ENCODE measurements at regions of chr2 and their contacts with region 1.

Region 1: DNA sequence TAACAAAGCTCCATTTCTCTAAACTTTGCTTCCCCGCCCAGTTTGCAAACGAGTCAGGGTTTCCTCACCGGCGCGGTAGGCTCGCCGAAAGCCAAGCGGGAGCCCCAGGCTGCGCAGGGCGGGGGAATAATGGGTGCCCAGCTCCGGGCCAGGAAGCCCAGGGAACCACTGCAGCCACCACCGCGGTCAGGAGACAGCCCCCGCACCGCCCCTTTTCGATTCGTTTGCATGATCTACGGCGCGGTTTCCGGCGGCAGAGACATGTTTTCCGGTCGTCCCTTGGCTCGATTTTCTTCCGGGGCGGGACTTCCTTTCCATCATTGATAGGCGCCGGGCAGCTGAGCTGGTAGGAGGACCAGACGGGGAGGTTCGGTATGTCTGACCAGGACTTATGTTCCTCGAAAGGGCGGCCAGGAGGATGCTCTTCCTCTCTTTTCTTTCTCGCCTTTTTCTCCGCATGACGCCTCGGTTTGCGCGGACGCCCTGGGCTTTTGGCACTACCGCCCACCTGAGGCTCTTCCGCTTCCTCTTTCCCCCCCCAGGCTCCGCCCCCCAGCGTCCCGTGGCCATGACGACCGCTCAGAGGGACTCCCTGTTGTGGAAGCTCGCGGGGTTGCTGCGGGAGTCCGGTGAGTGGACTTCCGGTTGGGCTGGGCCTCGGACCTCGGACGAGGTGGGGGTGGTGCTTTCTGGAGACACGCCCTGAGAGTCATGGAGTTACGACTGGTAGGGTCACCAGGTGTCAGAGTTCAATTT is at the start of gene STK11IP:
- DNase-seq: peak; percentile 87 to 93 (median 88)
- H3K4me3 ChIP-seq: peak within 1 kb of the TSS; percentile 62 to 100
- H3K4me3 Mint-ChIP-seq: peak within 1 kb of the TSS; percentile 90 to 97 (median 96)
- H3K27ac ChIP-seq: peak within 1 kb of the TSS; percentile 72
- H3K27ac Mint-ChIP-seq: peak within 1 kb of the TSS; percentile 90 to 99 (median 97)
- H3K4me1 ChIP-seq: peaks cover 14% of the 10 kb centered on the region
- H3K4me1 Mint-ChIP-seq: peaks cover 10 to 24% (median 17%) of the 10 kb centered on the region in 4 donors
- H3K27me3 ChIP-seq: no peaks in the 10 kb centered on the region
- H3K27me3 Mint-ChIP-seq: peaks cover 3 to 7% of the 10 kb centered on the region in 2 donors
- total RNA-seq, gene STK11IP: 48.7 to 50.2 TPM

Region 2: DNA sequence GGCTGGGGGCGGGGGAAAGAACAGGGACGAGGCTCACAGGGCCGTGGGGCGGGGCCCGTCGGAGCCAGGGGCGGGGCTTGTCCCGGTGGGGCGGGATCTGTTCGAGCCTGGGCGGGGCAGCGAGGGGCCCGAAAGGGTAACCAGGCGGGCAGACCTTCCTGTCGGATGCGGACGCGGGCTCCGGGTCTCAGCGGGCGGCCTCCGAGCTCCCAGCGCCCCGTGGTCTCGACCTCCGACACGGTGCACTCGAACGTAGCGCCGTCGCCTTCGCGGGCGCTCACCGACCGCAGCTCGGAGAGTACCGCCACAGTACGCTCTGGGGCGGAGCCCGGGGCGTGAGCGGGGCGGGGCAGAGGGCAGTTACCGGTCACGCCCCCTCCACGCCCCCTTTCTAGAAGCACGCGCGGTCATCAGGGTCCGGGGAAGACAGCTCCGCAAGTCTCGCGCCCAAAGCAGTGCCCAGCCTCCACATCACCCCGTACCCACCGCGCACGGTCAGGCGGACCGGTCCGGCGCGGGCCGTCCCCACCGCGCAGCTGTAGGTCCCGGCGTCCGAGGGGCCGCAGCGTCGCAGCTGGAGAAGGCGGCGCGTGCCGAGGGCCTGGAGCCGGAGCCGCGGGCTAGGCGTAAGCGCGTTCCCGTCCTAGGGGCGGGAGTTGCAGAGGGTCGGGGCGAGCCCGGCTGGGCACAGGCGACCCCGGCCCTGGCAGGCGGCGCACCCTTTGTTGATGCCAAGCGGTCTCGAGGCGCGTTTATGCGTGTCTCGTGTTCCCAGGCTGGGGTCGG is 45.2 kb before region 1 on chr2:
- CTCF ChIA-PET with region 1: interaction called, 3 read pairs
- POLR2A ChIA-PET with region 1: interaction called, 10 read pairs
- intact Hi-C with region 1: loop called (anchors 2 kb)
- DNase-seq: peak; percentile 70 to 79 (median 76)
- H3K4me3 ChIP-seq: peak overlapping the region; percentile 11 to 44
- H3K4me3 Mint-ChIP-seq: peak overlapping the region; percentile 51 to 86 (median 75)
- H3K27ac ChIP-seq: no peak overlapping the region
- H3K27ac Mint-ChIP-seq: peak overlapping the region in 2 of 7 donors; percentile 22 to 79
- H3K4me1 ChIP-seq: peaks cover 18% of the 10 kb centered on the region
- H3K4me1 Mint-ChIP-seq: peaks cover 5 to 18% (median 10%) of the 10 kb centered on the region in 4 donors
- H3K27me3 ChIP-seq: peaks cover 11% of the 10 kb centered on the region
- H3K27me3 Mint-ChIP-seq: peaks cover 25 to 52% of the 10 kb centered on the region in 2 donors

Region 3: GRCh38 chr2:219642465-219643080 is 44.8 kb after region 1 on chr2:
- CTCF ChIA-PET with region 1: interaction called, 5 read pairs
- POLR2A ChIA-PET with region 1: no interaction called
- intact Hi-C with region 1: loop called (anchors 1 kb)
- DNase-seq: peak; percentile 80 to 88 (median 83)
- H3K4me3 ChIP-seq: no peak overlapping the region
- H3K4me3 Mint-ChIP-seq: no peak overlapping the region
- H3K27ac ChIP-seq: no peak overlapping the region
- H3K27ac Mint-ChIP-seq: peak overlapping the region in 4 of 7 donors; percentile 32 to 70 (median 53)
- H3K4me1 ChIP-seq: no peaks in the 10 kb centered on the region
- H3K4me1 Mint-ChIP-seq: peaks cover 0 to 6% (median 4%) of the 10 kb centered on the region in 4 donors
- H3K27me3 ChIP-seq: no peaks in the 10 kb centered on the region
- H3K27me3 Mint-ChIP-seq: peaks cover 12 to 36% of the 10 kb centered on the region in 2 donors

Region 4: GRCh38 chr2:219701847-219702634 is 104.3 kb after region 1 on chr2:
- CTCF ChIA-PET with region 1: no interaction called
- POLR2A ChIA-PET with region 1: no interaction called
- intact Hi-C with region 1: no loop called
- DNase-seq: no peak
- H3K4me3 ChIP-seq: no peak overlapping the region
- H3K4me3 Mint-ChIP-seq: no peak overlapping the region
- H3K27ac ChIP-seq: no peak overlapping the region
- H3K27ac Mint-ChIP-seq: no peak overlapping the region
- H3K4me1 ChIP-seq: no peaks in the 10 kb centered on the region
- H3K4me1 Mint-ChIP-seq: no peaks in the 10 kb centered on the region
- H3K27me3 ChIP-seq: peaks cover 11% of the 10 kb centered on the region
- H3K27me3 Mint-ChIP-seq: peaks cover 8 to 42% of the 10 kb centered on the region in 2 donors